ENCODE measurements at regions of chr19 and their contacts with region 1.

Region 1: GRCh38 chr19:15379083-15379995 is at the start of gene AKAP8:
- DNase-seq: peak; percentile 98 to 99 (median 99)
- ATAC-seq: peak; percentile 95 to 97 (median 96)
- H3K4me3 ChIP-seq: peak within 1 kb of the TSS; percentile 71 to 99 (median 90)
- H3K27ac ChIP-seq: peak within 1 kb of the TSS; percentile 90 to 99 (median 97)
- H3K4me1 ChIP-seq: peaks cover 15 to 52% (median 45%) of the 10 kb centered on the region in 12 donors
- H3K27me3 ChIP-seq: no peaks in the 10 kb centered on the region
- CTCF ChIP-seq: no peak
- POLR2A ChIP-seq: peak; percentile 32 to 82
- total RNA-seq, gene AKAP8: 15.3 to 24.8 (median 18.9) TPM

Region 2: DNA sequence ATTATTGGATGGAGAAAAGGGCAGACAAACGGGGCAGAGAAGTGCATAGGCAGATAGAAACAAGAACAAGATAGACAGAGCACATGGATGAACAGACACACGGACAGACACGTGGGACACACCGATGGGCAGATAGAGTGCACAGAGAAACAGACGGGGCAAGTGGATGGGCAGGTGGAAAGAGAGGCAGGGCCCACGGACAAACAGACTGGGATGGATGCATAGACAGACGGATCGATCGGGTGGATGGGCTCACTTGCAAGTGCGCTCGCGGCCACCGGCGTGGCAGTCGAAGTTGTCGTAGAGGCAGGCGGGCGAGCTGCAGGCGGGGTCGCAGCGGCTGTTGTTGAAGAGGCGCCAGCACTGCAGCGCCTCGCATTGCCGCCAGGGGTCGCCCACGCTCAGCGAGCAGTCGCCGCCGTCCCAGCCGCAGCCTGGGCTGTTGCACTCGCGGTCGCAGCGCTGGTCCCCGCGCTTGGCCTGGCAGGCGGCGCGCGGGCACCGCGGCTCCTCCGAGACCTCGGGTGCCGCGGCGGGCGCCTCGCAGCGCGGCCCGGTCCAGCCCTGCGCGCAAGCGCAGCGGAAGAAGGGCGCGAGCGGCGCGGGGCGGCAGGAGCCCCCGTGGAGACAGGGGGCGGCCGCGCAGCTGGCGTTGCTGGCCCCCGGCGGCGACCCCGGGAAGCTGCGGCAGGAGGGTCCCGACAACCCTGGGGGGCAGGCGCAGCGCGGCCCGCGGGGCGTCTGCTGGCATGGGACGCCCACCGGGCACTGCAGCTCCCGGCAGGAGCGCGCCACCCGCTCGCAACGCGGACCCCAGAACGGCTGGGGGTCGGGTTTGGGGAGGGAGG is 201.8 kb before region 1 on chr19:
- intact Hi-C with region 1: loop called in 2 of 10 experiments (anchors 10 kb)
- DNase-seq: peak; percentile 76 to 93 (median 82)
- ATAC-seq: peak; percentile 41 to 91 (median 82)
- H3K4me3 ChIP-seq: peak overlapping the region in 7 of 12 donors; percentile 20 to 47 (median 34)
- H3K27ac ChIP-seq: peak overlapping the region in 1 of 12 donors; percentile 40
- H3K4me1 ChIP-seq: peaks cover 0 to 23% (median 2%) of the 10 kb centered on the region in 12 donors
- H3K27me3 ChIP-seq: peaks cover 0 to 11% (median 4%) of the 10 kb centered on the region in 9 donors
- CTCF ChIP-seq: peak; percentile 83 to 99 (median 96)
- POLR2A ChIP-seq: no peak

Region 3: DNA sequence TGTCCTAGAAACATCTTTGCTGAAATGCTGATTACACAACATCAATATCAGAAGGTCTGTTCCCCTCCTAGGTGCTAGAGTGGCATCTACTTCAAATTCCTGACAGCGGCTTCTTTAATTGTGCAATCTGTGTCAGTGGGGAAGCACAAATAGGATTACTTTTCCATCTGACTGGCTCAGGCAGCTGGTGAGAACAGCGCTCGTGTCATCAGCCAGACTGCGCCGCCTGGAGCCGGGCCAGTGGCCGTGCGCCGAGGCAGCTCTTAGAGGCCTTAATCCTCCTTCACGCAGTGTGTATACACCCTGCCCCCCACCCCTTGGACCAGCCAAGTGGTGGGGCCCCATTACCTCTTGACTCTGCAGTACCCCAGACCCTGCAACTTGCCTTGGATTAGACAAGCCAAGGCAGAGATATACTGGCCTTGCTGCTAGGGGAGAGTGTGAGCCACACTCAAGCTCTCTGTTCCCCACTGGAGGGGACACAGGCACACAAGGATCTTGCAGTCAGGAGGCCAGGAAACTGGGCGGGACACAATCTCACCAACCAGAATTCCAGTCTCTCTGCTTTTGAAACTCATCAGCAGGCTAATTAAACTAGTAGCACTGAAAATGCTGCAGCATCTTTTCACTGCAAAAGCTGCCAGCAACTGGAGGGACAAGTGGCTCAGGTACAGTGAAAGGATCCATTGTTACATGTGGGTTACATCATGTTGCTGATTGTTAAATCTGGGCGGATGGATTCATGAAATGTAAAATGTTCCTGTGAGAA is 98.2 kb before region 1 on chr19:
- intact Hi-C with region 1: loop called in 2 of 10 experiments (anchors 5 to 10 kb)
- DNase-seq: peak; percentile 81 to 92 (median 90)
- ATAC-seq: peak; percentile 82 to 92 (median 88)
- H3K4me3 ChIP-seq: peak overlapping the region in 2 of 12 donors; percentile 10 to 13
- H3K27ac ChIP-seq: peak overlapping the region in 11 of 12 donors; percentile 14 to 83 (median 58)
- H3K4me1 ChIP-seq: peaks cover 45 to 100% (median 96%) of the 10 kb centered on the region in 12 donors
- H3K27me3 ChIP-seq: no peaks in the 10 kb centered on the region
- CTCF ChIP-seq: peak in 8 of 12 donors; percentile 10 to 53 (median 22)
- POLR2A ChIP-seq: no peak

Region 4: DNA sequence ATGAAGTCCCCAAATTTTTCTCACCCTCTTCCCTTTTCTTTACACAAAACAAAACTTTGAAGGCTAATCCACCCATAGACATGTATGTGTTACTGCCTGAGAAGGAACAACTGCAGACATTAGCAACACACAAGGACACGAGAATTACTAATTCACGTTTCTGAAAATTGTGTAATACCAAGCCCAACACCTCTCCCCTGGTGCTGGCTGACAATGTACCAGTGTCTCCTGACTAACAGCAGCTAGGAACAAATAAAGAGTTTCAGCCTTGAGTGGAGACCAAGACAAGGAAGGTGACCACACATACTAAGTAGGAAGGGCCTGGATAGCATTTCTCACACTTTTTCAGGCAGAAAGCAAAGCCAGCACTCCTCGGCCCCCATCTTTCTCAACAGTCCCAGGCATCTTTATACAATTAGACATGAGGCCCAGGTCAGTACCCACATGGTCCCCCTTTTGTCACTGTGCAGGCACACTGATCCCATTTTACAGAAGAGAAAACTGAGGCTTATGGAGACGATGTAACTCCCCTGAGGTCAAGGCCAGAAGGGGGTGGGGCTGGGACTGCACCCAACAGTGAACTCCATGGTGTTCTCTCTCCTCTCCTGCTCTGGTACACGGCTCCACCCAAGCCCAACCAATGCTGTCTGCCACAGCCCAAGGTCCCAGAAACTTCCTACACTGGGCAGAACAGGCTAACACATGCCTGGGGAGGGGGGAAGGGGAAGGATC is 55.7 kb before region 1 on chr19:
- intact Hi-C with region 1: no loop called
- DNase-seq: peak in 2 of 5 donors; percentile 67 to 68
- ATAC-seq: peak; percentile 64 to 80 (median 76)
- H3K4me3 ChIP-seq: no peak overlapping the region
- H3K27ac ChIP-seq: peak overlapping the region in 9 of 12 donors; percentile 25 to 75 (median 59)
- H3K4me1 ChIP-seq: peaks cover 19 to 99% (median 95%) of the 10 kb centered on the region in 12 donors
- H3K27me3 ChIP-seq: no peaks in the 10 kb centered on the region
- CTCF ChIP-seq: no peak
- POLR2A ChIP-seq: no peak

Region 5: DNA sequence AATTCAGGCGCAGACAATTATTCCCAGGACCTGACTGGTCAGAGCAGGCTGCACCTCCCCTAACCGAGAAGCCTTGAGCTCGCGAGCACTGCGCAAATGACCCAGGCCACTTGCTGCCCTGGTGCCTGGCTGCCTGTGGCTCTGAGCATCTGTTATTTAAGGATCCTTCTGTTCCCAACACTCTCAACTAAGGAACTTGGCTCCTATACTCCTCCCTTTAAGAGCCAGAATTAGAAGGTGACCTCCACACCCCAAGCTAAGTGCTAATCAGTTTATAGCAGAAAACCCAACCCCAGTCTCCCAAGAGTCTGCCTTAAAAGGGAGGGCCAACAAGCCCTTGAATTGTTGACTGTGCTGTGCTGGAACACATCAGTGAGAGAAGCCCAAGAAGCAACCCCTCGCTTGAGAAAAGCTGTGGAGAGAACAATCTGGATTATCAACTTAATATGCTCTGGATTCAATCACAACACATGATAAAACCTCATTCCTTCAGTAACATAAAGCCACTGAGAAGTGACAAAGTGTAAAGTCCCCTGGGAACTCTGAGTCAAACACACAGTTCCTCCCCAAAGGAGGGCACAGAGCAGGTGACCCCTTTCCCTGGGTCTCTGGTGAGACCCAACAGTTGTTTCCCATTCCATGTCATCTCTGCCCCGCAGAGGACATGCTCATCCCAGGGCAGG is 24.9 kb after region 1 on chr19:
- intact Hi-C with region 1: loop called in 1 of 10 experiments (anchors 1 kb)
- DNase-seq: peak in 1 of 5 donors; percentile 66
- ATAC-seq: peak; percentile 38 to 71 (median 64)
- H3K4me3 ChIP-seq: peak overlapping the region in 2 of 12 donors; percentile 16 to 24
- H3K27ac ChIP-seq: peak overlapping the region; percentile 19 to 85 (median 72)
- H3K4me1 ChIP-seq: peaks cover 14 to 78% (median 56%) of the 10 kb centered on the region in 12 donors
- H3K27me3 ChIP-seq: no peaks in the 10 kb centered on the region
- CTCF ChIP-seq: no peak
- POLR2A ChIP-seq: no peak

Region 6: DNA sequence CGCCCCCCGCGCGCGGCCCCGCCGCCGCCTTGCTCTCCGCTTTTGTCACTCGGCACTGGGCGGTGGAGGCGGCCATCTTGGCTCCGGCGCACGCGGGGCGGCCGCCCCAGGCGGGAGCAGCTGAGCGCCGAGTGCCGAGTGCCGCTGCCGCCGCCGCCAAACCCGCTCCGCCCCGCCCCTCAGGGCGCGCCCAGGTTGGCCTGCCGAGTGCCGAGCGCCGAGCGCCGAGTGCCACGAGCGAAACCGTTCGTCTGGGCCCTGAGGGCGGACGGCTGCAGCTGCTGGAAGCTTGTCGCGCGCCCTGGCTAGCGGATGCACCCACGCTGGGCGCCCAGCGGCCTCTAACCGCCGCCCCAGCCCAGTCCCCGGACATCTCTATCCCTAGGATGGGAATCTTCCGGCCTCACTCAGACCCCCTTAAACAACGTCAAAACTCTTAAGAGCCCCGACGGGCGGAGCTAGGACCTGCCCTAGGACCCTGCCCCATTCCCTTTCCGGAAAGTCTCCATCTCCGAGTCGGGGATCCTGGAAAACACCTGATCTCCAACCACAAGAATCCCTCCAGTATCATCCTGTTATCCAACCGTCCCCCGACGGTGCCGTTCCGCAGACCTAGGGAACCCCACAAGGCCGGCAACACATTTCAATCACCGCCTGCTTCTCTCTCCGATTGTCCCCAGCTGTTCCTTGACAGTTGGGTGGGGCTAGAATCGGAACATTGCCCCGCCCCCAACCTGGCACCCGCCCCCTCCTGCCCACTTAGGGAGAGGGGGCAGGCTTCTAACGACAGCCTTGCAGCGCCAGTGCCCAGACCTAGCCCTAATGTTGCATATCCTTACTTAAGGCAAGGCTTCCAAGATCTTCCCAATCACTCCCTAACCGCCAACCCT is 53.5 kb after region 1 on chr19:
- intact Hi-C with region 1: loop called in 1 of 10 experiments (anchors 5 kb)
- DNase-seq: peak; percentile 93 to 97 (median 95)
- ATAC-seq: peak; percentile 68 to 92 (median 91)
- H3K4me3 ChIP-seq: peak overlapping the region; percentile 52 to 97 (median 86)
- H3K27ac ChIP-seq: peak overlapping the region; percentile 87 to 99 (median 95)
- H3K4me1 ChIP-seq: peaks cover 3 to 45% (median 31%) of the 10 kb centered on the region in 12 donors
- H3K27me3 ChIP-seq: no peaks in the 10 kb centered on the region
- CTCF ChIP-seq: no peak
- POLR2A ChIP-seq: peak in 1 of 2 donors; percentile 64

Region 7: DNA sequence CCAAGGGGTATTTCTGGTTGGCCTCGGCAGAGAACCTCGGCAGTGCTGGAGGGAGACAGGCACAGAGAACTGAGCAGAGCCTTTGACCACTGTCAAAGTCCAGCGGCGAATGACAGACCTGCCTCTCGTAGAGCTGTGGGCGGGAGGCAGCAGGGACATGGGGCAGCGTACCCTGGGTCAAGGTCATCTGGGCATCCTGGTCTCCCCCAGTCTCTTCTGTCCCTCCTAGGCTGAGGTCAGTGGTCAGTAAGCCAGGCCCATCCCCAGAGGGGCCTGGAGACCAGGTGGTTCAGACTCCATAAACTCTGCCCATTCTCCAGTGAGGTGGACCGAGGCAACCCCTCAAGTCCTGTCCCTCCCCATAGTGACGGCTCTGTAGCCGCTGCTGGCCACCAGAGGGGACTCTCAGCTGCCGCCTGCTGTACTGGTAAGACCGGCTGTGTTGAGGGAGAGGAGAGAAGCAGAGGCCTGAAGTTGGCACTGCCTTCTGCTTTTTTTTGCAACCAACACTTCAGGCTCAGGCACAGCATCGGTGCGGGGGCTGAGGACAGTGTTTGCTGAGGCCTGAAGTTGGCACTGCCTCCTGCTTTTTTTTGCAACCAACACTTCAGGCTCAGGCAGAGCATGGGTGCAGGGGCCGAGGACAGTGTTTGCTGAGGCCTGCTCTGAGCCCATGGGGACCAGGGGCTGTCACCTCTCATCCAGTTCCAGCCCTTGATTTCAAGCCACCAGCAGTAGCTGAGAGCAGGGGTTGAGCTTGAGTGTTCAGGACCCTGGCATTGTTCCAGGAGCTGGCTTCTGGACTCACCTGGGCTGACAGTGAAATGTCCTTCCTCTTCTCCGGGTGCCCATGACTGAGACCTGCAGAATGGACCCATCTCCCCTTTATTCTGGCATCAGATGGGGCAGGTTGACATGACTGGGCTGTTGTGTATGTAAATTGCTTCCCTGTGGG is 100.3 kb after region 1 on chr19 and contains the start of gene PGLYRP2:
- intact Hi-C with region 1: no loop called
- DNase-seq: peak in 1 of 5 donors; percentile 17
- ATAC-seq: peak in 3 of 4 donors; percentile 65 to 81 (median 78)
- H3K4me3 ChIP-seq: no peak within 1 kb of the TSS
- H3K27ac ChIP-seq: no peak within 1 kb of the TSS
- H3K4me1 ChIP-seq: no peaks in the 10 kb centered on the region
- H3K27me3 ChIP-seq: no peaks in the 10 kb centered on the region
- CTCF ChIP-seq: peak in 8 of 12 donors; percentile 12 to 35 (median 26)
- POLR2A ChIP-seq: no peak
- total RNA-seq, gene PGLYRP2: not detected

Region 8: DNA sequence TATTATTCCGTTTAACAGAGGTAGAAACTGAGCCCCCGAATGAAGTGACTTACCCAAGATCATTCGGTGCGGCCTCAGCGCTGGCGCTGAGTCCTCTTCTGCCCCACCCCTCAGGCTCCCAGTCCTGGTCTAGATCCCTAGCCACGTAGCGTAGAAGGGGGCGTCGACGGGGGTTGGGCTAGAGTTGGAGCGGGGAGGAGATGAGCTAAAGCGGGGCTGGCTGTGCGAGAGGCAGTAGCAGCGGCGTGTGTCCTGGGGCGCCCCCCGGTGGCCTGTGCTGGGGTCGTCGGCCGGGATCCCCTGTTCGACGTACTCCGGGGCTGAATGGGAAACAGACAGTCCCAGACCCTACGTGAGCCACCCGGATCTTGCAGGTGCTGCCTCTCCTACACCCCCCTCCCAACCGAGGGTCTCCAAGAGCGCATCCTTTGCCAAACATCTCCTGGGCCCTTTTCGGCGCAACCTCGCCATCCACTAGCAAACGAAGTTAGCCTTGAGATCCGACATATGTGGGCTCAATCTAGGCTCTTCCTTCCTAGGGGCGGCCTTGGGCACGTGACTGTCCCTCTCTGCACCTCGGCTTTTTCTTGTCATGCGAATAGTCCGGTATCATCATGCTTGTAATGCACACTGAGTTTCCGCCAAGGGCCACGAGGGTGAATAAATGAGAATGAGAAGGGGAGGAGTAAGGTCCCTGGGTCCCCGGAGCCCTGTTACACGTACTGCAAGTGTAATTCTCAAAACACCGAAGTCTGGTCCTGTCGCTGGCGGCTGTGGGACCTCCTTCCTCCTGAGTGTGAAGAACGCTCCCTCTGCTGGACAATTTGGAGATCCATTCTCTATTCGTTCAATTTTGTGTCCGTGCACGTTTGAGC is 176.7 kb after region 1 on chr19:
- intact Hi-C with region 1: loop called in 1 of 10 experiments (anchors 10 kb)
- DNase-seq: peak; percentile 86 to 95 (median 91)
- ATAC-seq: peak; percentile 84 to 97 (median 95)
- H3K4me3 ChIP-seq: peak overlapping the region in 9 of 12 donors; percentile 23 to 49 (median 37)
- H3K27ac ChIP-seq: peak overlapping the region in 3 of 12 donors; percentile 12 to 31 (median 26)
- H3K4me1 ChIP-seq: peaks cover 0 to 18% (median 12%) of the 10 kb centered on the region in 12 donors
- H3K27me3 ChIP-seq: peaks cover 0 to 40% (median 9%) of the 10 kb centered on the region in 9 donors
- CTCF ChIP-seq: peak; percentile 66 to 85 (median 76)
- POLR2A ChIP-seq: no peak

Measured in heart left ventricle (tissue), 16 donors.